ENCODE measurements at regions of chr15 and their contacts with region 1.

Region 1: GRCh38 chr15:46297766-46298165 is 662.9 kb downstream of the SQOR start:
- DNase-seq: no peak
- ATAC-seq: no peak
- H3K4me3 Mint-ChIP-seq: no peak overlapping the region
- H3K27ac Mint-ChIP-seq: no peak overlapping the region
- H3K4me1 Mint-ChIP-seq: no peaks in the 10 kb centered on the region
- H3K27me3 Mint-ChIP-seq: peaks cover 3% of the 10 kb centered on the region
- CTCF ChIP-seq: no peak

Region 2: DNA sequence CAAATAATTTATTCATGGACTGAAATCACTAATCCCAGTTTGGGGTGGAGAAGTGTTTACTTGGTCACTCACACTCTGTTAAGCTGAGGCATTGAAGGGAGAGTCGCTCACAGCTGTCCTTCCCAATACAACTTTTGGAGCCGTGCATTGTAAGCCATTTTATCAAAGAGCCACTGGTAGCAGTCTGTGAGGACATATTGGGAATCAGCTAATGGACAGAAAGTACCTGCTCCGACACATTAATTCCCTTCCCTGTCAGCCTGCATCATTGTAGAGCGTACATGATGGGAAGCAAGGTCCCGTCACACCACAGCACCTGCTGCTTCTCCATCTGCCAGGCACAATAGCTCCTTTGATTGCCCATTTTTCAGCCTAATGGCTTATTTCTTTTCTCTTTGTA is 19.7 kb before region 1 on chr15:
- CTCF ChIA-PET with region 1: no interaction called
- POLR2A ChIA-PET with region 1: no interaction called
- intact Hi-C with region 1: no loop called
- DNase-seq: no peak
- ATAC-seq: no peak
- H3K4me3 Mint-ChIP-seq: no peak overlapping the region
- H3K27ac Mint-ChIP-seq: no peak overlapping the region
- H3K4me1 Mint-ChIP-seq: no peaks in the 10 kb centered on the region
- H3K27me3 Mint-ChIP-seq: no peaks in the 10 kb centered on the region
- CTCF ChIP-seq: no peak

Region 3: DNA sequence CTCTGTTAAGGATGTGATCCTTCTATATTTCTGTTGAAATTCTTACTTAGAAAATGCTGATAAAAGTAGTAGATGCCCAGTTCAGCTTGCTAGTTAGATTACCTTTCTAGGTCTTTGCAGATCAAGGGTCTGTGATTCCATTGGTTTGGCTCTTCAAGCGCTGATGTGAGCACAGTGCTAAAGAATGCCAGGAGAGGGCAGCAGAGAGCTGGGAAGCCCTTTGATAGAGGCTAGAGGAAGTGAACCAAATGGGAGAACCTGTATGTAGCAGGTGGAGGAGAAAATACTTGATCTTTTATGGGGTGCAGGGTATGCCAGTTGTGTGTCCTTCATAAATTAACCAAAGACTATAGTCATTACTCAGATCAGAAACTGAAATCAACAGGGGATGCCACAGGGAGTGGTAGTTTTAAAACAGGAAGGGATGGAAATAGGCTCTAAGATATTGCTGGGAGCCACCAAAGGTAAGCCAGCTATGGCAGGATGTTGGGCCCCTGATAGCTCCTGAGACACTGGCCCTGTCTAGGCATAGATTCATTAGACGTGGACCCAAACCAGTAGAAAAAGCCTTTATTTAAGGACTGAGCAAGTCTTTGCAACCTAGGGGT is 14.5 kb after region 1 on chr15:
- CTCF ChIA-PET with region 1: interaction called, 17 read pairs
- POLR2A ChIA-PET with region 1: no interaction called
- intact Hi-C with region 1: no loop called
- DNase-seq: peak; percentile 76
- ATAC-seq: peak; percentile 76
- H3K4me3 Mint-ChIP-seq: no peak overlapping the region
- H3K27ac Mint-ChIP-seq: no peak overlapping the region
- H3K4me1 Mint-ChIP-seq: no peaks in the 10 kb centered on the region
- H3K27me3 Mint-ChIP-seq: peaks cover 4% of the 10 kb centered on the region
- CTCF ChIP-seq: peak; percentile 80